ENCODE measurements at regions of chr20 and their contacts with region 1.

Region 1: GRCh38 chr20:407133-407952 is 756 bp upstream of the RBCK1 start:
- DNase-seq: peak; percentile 58 to 83 (median 74)
- H3K4me3 ChIP-seq: peak overlapping the region; percentile 39 to 100 (median 98)
- H3K27ac ChIP-seq: peak overlapping the region in 54 of 59 donors; percentile 6 to 99 (median 88)
- H3K27me3 ChIP-seq: no peaks in the 10 kb centered on the region
- CTCF ChIP-seq: peak in 23 of 56 donors; percentile 11 to 48 (median 26)

Region 2: GRCh38 chr20:330233-331149 is 76.9 kb before region 1 on chr20:
- intact Hi-C with region 1: no loop called
- DNase-seq: peak in 6 of 10 donors; percentile 56 to 68 (median 60)
- H3K4me3 ChIP-seq: peak overlapping the region in 11 of 59 donors; percentile 0 to 31 (median 10)
- H3K27ac ChIP-seq: peak overlapping the region in 56 of 59 donors; percentile 1 to 99 (median 73)
- H3K27me3 ChIP-seq: no peaks in the 10 kb centered on the region
- CTCF ChIP-seq: peak; percentile 67 to 96 (median 87)

Region 3: DNA sequence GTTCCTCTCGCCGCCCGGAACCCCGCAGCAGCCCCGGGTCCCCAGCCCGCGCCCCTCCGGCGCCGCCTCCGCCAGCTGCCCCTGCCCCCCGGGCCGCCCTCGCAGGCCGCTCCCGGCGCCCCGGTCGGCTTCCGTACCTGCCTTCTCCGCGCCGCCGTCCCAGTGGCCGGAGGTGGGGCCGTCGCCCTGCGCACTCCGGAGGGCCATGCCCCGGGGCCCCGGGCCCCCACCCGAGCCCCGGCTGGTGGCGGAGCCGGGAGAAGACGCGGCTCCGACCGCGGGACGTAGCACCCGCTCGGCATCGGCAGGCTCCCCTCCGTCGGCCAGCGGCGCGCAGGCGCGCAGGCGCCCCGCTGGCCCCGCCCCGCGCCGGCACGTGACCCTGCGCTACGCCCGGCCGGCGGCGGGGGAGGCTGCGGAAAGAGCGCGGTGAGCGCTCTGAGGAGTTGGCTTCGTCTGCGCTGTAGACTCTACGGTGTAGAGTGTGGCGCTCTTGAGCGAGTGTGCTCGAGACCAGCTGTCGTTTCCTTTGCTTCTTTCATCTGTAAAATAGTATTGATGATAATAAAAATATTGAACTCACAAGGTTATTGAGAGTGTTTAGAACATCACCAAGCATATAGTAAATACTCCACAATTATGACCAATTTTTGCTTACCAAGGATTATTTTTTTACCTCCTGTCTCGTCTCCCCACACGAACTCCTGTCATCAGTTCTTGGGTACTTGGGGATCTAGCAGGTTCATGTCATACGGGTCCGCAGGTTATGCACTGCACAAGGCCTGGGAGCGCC is 55.1 kb after region 1 on chr20 and contains the start of gene TBC1D20:
- intact Hi-C with region 1: loop called in 1 of 2 experiments (anchors 2 kb)
- DNase-seq: peak; percentile 62 to 88 (median 84)
- H3K4me3 ChIP-seq: peak within 1 kb of the TSS; percentile 59 to 97 (median 88)
- H3K27ac ChIP-seq: peak within 1 kb of the TSS; percentile 48 to 97 (median 87)
- H3K27me3 ChIP-seq: no peaks in the 10 kb centered on the region
- CTCF ChIP-seq: peak in 51 of 56 donors; percentile 18 to 70 (median 50)
- total RNA-seq, gene TBC1D20: 29.0 to 51.1 (median 39.1) TPM

Region 4: DNA sequence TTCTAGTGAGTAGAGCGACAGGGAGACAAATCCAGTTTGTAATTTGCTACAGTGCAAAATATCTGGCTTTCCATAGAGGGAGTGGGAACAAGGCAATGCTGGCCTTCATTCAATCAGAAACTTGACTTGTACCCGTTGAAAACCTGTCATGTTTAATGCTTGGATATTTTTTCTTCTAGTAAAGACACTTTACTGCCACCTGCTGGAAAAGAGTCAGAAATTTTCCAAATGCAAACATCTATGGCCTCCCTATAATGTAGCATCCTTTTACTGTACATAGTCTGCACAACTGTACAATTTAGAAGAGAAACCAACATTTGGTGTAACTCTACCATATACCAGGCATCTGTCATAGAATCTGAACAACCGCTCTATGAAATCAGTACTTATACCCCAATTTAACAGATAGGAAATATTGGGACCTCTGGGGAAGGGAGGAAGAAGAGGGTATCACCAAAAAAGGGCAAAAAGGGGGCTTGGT is 71.6 kb after region 1 on chr20:
- intact Hi-C with region 1: loop called in 1 of 2 experiments (anchors 5 kb)
- DNase-seq: peak in 1 of 10 donors; percentile 18
- H3K4me3 ChIP-seq: no peak overlapping the region
- H3K27ac ChIP-seq: peak overlapping the region in 8 of 59 donors; percentile 4 to 65 (median 16)
- H3K27me3 ChIP-seq: no peaks in the 10 kb centered on the region
- CTCF ChIP-seq: peak; percentile 45 to 87 (median 71)

Region 5: GRCh38 chr20:543369-544152 is 136.2 kb after region 1 on chr20 and contains the start of gene CSNK2A1:
- intact Hi-C with region 1: loop called in 1 of 2 experiments (anchors 2 kb)
- DNase-seq: peak; percentile 90 to 96 (median 94)
- H3K4me3 ChIP-seq: peak within 1 kb of the TSS; percentile 72 to 100 (median 95)
- H3K27ac ChIP-seq: peak within 1 kb of the TSS; percentile 80 to 100 (median 97)
- H3K27me3 ChIP-seq: peaks cover 0 to 5% (median 0%) of the 10 kb centered on the region in 45 donors
- CTCF ChIP-seq: peak in 23 of 56 donors; percentile 7 to 59 (median 37)
- total RNA-seq, gene CSNK2A1: 89.8 to 145 (median 121) TPM

Region 6: GRCh38 chr20:805713-806112 is 398.4 kb after region 1 on chr20:
- intact Hi-C with region 1: no loop called
- DNase-seq: no peak
- H3K4me3 ChIP-seq: no peak overlapping the region
- H3K27ac ChIP-seq: no peak overlapping the region
- H3K27me3 ChIP-seq: peaks cover 0 to 15% (median 0%) of the 10 kb centered on the region in 45 donors
- CTCF ChIP-seq: no peak

Measured in dorsolateral prefrontal cortex (tissue), 120 donors.